GM12878 (cell line): ENCODE measurements at regions of chr3 and their contacts with region 1.

Region 1: DNA sequence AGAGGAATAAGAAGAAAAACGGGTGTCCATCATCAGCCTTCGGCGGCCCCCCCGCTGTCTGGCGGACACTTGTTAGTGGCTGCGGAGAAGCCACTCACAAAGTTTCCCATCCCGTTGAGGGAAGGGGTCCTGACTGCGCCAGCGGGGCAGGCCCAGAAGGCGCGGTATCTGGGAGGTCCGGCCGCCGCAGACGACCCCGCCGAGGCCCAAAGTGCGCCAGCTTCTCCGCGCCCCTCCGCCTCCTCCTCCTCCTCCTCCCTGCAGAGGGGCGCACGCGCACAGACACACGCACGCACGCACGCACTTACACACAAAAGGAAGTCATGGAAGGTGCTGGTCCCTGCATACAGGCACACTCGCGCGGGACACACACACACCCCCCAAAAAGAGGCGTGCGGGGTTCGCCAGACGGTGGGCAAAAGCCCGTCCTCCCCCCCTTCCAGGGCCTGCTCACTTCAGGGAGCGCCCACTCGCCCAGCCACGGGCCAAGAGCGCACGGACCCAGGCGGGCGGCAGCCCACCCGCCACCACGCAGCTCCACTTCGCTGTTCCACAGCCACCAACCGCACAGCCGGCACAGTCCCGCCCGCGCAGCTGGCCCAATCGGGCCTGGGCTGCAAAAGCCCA is 18.0 kb downstream of the ZNF148 start:
- DNase-seq: no peak
- ATAC-seq: peak; percentile 95
- H3K4me3 ChIP-seq: peak overlapping the region; percentile 79
- H3K27ac ChIP-seq: peak overlapping the region; percentile 39
- H3K4me1 ChIP-seq: peaks cover 10% of the 10 kb centered on the region
- H3K27me3 ChIP-seq: no peaks in the 10 kb centered on the region
- CTCF ChIP-seq: no peak
- EP300 ChIP-seq: no peak
- POLR2A ChIP-seq: peak; percentile 74
- RAD21 ChIP-seq: no peak

Region 2: GRCh38 chr3:125367403-125368230 is 10.5 kb after region 1 on chr3:
- CTCF ChIA-PET with region 1: interaction called, 10 read pairs
- POLR2A ChIA-PET with region 1: interaction called, 8 read pairs
- RAD21 ChIA-PET with region 1: no interaction called
- SMC1A ChIA-PET with region 1: interaction called, 9 read pairs
- in situ Hi-C with region 1: no loop called
- intact Hi-C with region 1: no loop called
- DNase-seq: no peak
- ATAC-seq: peak; percentile 34; the same call in 2 of the 3 replicates
- H3K4me3 ChIP-seq: no peak overlapping the region
- H3K27ac ChIP-seq: no peak overlapping the region
- H3K4me1 ChIP-seq: peaks cover 4% of the 10 kb centered on the region
- H3K27me3 ChIP-seq: no peaks in the 10 kb centered on the region
- CTCF ChIP-seq: no peak
- EP300 ChIP-seq: no peak
- POLR2A ChIP-seq: no peak
- RAD21 ChIP-seq: no peak